ENCODE measurements at regions of chr12 and their contacts with region 1.

Region 1: DNA sequence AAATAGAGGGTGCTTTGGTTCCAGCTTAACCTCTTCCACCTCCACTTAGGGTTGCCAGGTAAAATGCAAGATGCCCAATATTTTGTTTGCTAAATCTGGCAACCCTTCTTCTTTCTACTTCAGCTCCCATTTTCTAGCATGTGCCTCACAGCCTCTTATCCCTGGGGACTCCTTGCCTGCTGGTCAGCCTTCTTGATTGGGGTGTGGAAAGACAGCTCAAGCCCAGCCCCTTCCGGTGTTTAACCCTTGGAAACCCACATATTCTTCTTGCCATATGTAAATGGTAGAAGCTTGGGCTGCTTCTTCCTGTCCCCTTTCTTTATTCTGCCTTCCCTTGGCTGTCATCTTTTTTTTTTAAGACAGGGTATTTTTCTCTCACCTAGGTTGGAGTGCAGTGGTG is 5.7 kb downstream of the SPIC start:
- DNase-seq: no peak
- ATAC-seq: no peak
- H3K4me3 ChIP-seq: no peak overlapping the region
- H3K4me3 Mint-ChIP-seq: no peak overlapping the region
- H3K27ac ChIP-seq: no peak overlapping the region
- H3K27ac Mint-ChIP-seq: no peak overlapping the region
- H3K4me1 ChIP-seq: no peaks in the 10 kb centered on the region
- H3K4me1 Mint-ChIP-seq: no peaks in the 10 kb centered on the region
- H3K27me3 ChIP-seq: no peaks in the 10 kb centered on the region
- H3K27me3 Mint-ChIP-seq: peaks cover 0 to 6% of the 10 kb centered on the region in 2 donors
- CTCF ChIP-seq: no peak

Region 2: DNA sequence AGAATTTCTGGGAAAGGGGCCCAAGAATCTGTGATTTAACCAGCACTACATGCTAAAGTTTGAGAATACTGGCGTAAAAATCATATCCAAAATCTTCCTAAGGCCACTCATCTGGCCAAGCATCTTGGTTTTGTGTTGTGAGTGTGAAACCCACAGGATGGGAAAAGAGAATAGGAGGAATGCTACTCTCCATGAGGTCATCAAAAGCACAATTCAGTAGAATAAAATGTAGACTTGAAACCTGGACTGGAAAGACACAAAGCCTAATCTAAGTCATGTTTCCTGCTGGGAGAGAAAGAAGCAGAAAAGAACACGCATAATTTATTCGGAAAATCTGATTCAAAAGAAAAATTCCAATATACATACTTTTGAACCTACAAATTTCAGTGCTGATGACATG is 964.9 kb before region 1 on chr12:
- intact Hi-C with region 1: no loop called
- DNase-seq: no peak
- ATAC-seq: no peak
- H3K4me3 ChIP-seq: no peak overlapping the region
- H3K4me3 Mint-ChIP-seq: no peak overlapping the region
- H3K27ac ChIP-seq: no peak overlapping the region
- H3K27ac Mint-ChIP-seq: no peak overlapping the region
- H3K4me1 ChIP-seq: no peaks in the 10 kb centered on the region
- H3K4me1 Mint-ChIP-seq: no peaks in the 10 kb centered on the region
- H3K27me3 ChIP-seq: no peaks in the 10 kb centered on the region
- H3K27me3 Mint-ChIP-seq: peaks cover 0 to 2% of the 10 kb centered on the region in 2 donors
- CTCF ChIP-seq: no peak

Region 3: DNA sequence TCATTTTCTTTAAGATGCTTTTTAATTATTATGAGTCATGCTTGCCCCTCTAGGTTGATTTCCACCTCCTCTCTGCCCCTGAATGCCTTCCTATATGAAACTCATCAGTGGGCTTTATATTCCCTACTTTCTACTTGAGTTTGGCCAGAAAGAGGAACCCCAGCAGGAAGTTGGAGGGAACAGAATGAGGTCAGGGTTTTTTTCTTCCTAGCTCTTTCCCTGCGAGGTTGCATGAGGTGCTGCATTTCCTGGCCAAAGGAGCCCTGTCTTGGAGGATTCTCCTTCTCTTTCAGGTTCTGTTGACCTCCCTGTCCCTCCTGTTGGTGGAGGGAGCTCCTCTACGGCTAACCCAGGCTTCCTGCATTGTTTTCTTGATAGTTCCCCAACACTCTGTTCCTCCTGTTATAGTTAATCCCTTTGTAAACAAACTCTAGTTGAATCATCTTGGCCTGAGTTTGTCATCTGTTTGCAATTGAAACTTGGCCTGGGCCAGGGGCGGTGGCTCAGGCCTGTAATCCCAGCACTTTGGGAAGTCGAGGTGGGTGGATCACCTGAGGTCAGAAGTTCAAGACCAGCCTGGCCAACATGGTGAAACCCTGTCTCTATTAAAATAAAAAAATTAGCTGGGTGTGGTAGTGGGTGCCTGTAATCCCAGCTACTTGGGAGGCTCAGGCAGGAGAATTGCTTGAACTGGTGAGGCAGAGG is 21.1 kb before region 1 on chr12:
- intact Hi-C with region 1: loop called (anchors 1 kb)
- DNase-seq: no peak
- ATAC-seq: no peak
- H3K4me3 ChIP-seq: no peak overlapping the region
- H3K4me3 Mint-ChIP-seq: no peak overlapping the region
- H3K27ac ChIP-seq: no peak overlapping the region
- H3K27ac Mint-ChIP-seq: no peak overlapping the region
- H3K4me1 ChIP-seq: peaks cover 19% of the 10 kb centered on the region
- H3K4me1 Mint-ChIP-seq: peaks cover 21 to 23% of the 10 kb centered on the region in 2 donors
- H3K27me3 ChIP-seq: no peaks in the 10 kb centered on the region
- H3K27me3 Mint-ChIP-seq: no peaks in the 10 kb centered on the region
- CTCF ChIP-seq: no peak

Measured in natural killer cell (primary cell).